Esophagus squamous epithelium (tissue), 5 donors: ENCODE measurements at regions of chr14 and their contacts with region 1.

Region 1: DNA sequence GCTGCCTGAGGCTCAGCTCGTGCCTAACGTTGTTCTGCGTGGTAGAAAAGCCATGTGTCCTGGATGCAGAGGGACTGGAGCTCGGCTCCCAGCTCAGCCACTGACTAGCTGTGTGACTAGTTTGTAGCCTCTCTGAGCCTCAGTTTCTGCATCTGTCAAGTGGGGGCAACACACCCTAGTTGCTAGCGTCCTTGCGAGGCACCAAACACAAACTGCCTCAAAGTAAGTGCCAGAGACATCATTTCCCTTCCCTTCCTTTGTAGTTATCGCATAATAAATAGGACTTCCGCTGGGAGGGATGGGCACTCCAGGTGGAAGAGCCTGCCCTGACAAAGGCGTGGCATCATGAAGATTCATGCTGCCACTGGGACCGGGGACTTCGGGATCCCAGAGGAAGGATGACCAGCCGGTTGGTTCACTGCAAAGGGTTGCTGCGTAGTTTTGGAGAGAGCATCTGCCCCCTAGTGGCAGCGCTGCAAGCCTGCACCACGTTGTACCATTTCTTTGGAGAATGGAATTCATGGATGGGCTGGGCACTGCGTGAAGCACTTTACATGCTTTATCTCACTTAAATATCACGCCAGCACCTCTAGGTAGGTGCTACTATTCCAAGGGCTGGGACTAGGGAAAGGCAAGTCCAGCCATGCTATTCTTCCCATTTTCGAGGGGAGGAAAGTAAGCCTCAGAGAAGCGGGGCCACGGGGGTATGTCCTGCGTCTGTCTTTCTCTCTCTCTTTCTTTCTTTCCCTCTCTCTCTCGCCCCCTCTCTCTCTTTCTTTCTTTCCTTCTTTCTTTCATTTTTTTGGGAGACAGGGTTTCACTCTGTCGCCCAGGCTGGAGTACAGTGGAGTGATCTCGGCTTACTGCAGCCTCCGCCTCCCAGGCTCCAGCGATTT is 4.6 kb downstream of the CCDC197 start:
- DNase-seq: no peak
- H3K4me3 ChIP-seq: peak overlapping the region in 1 of 4 donors; percentile 28
- H3K27ac ChIP-seq: no peak overlapping the region
- H3K4me1 ChIP-seq: peaks cover 0 to 15% (median 12%) of the 10 kb centered on the region in 3 donors
- H3K27me3 ChIP-seq: peaks cover 0 to 54% (median 2%) of the 10 kb centered on the region in 4 donors
- CTCF ChIP-seq: peak; percentile 93 to 97 (median 95)
- POLR2A ChIP-seq: no peak

Region 2: DNA sequence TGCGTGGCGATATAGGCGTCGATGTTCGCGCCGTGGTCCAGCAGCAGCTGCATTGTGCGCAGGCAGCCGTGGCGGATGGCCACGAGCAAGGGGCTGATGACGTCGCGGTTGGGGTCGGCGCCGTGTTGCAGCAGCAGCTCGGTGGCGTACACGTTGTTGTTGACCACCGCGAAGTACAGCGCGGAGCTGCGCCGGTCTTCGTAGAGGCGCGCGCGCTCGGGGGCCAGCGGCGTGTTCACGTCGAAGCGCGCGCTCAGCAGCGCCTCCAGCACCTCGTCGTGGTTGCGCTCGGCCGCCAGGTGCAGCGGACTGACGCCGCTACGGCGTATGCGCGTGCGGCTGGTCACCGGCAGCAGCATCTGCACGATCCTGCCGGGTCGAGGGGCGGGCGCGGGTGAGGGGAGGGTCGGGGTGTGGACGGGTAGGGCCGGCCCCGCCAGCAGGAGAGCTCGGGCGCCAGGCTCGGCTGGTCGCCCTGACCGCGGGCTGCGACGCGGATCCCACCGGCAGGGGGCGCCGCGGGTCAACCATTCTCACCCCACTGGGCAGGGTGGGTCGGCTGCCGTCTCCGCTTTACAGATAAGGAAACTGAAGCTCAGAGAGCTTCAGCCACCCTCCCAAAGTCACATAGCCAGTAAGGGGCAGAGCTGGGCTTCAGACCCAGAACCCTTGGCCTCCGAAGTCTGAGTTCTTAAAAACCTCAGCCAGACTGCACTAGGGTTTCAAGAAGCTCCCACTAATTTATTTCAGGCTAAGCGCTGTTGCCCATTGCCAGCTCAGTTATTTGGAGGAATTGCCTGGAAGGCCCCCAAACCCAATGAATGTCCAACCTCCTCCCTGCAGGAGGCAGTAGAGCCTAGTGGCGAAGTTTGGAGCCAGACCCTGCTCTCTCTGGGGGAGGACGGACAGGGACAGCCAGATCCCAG is 62.2 kb before region 1 on chr14:
- intact Hi-C with region 1: loop called (anchors 5 kb)
- DNase-seq: peak; percentile 24
- H3K4me3 ChIP-seq: peak overlapping the region; percentile 8 to 62 (median 36)
- H3K27ac ChIP-seq: peak overlapping the region in 3 of 4 donors; percentile 8 to 81 (median 69)
- H3K4me1 ChIP-seq: peaks cover 18 to 61% (median 36%) of the 10 kb centered on the region in 3 donors
- H3K27me3 ChIP-seq: peaks cover 0 to 25% (median 0%) of the 10 kb centered on the region in 4 donors
- CTCF ChIP-seq: peak; percentile 86 to 98 (median 90)
- POLR2A ChIP-seq: no peak